B cell (primary cell): ENCODE measurements at regions of chr14 and their contacts with region 1.

Region 1: GRCh38 chr14:24710403-24711112 is 76.6 kb upstream of the GZMB start:
- DNase-seq: peak; percentile 74
- ATAC-seq: peak; percentile 37
- H3K4me3 ChIP-seq: no peak overlapping the region
- H3K4me3 Mint-ChIP-seq: no peak overlapping the region
- H3K27ac ChIP-seq: no peak overlapping the region
- H3K27ac Mint-ChIP-seq: no peak overlapping the region
- H3K4me1 ChIP-seq: peaks cover 11 to 25% of the 10 kb centered on the region in 2 donors
- H3K4me1 Mint-ChIP-seq: peaks cover 32% of the 10 kb centered on the region
- H3K27me3 ChIP-seq: peaks cover 0 to 11% (median 0%) of the 10 kb centered on the region in 4 experiments
- H3K27me3 Mint-ChIP-seq: no peaks in the 10 kb centered on the region
- CTCF ChIP-seq: peak; percentile 91

Region 2: DNA sequence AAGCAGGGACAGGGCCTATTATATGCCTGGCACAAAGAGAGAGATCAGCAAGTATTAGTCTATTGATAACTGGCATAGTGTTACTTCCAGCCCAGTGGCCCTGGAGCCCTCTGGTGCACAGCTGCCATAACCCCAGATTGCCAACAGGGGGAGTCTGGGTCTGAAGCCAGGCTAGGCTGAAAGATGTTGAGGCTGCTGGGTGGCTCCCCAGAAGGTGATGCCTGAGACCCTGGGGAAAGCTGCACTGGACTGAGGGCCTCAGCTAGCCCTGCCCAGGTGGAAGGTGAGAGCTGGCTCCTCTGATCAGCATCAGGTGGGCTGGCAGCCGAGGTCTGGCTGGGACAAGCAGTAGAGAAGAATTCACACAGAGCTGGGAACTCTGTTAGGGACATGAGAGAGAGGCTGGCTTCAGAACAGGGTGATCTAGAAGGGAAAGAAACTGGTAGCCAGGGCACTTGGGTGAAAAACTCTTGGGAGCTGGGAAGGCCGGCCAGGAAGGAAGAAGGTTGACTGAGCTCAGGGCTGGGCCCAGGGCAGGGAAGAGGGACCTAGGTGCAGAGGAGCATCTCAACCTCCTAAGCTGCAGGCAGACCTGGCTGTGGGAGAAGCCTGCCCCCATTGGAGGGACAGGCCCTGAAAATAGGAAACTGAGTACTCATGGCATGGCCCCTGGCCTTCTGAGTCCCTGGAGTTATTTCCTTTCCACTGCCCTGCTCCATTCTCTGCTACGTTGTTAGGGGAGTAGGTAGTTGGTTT is 104.9 kb before region 1 on chr14:
- CTCF ChIA-PET with region 1: interaction called, 16 read pairs
- POLR2A ChIA-PET with region 1: no interaction called
- intact Hi-C with region 1: no loop called
- DNase-seq: peak; percentile 73
- ATAC-seq: peak; percentile 93
- H3K4me3 ChIP-seq: no peak overlapping the region
- H3K4me3 Mint-ChIP-seq: no peak overlapping the region
- H3K27ac ChIP-seq: no peak overlapping the region
- H3K27ac Mint-ChIP-seq: peak overlapping the region; percentile 57
- H3K4me1 ChIP-seq: peaks cover 25 to 27% of the 10 kb centered on the region in 2 donors
- H3K4me1 Mint-ChIP-seq: peaks cover 36% of the 10 kb centered on the region
- H3K27me3 ChIP-seq: no peaks in the 10 kb centered on the region
- H3K27me3 Mint-ChIP-seq: peaks cover 13% of the 10 kb centered on the region
- CTCF ChIP-seq: peak; percentile 92

Region 3: GRCh38 chr14:24678801-24679247 is 31.7 kb before region 1 on chr14:
- CTCF ChIA-PET with region 1: interaction called, 54 read pairs
- POLR2A ChIA-PET with region 1: no interaction called
- intact Hi-C with region 1: loop called (anchors 2 kb)
- DNase-seq: peak; percentile 91
- ATAC-seq: peak; percentile 96
- H3K4me3 ChIP-seq: peak overlapping the region; percentile 3 to 58 (median 31)
- H3K4me3 Mint-ChIP-seq: peak overlapping the region; percentile 84
- H3K27ac ChIP-seq: peak overlapping the region in 1 of 2 donors; percentile 7
- H3K27ac Mint-ChIP-seq: peak overlapping the region; percentile 76
- H3K4me1 ChIP-seq: peaks cover 32% of the 10 kb centered on the region in 2 donors
- H3K4me1 Mint-ChIP-seq: peaks cover 49% of the 10 kb centered on the region
- H3K27me3 ChIP-seq: no peaks in the 10 kb centered on the region
- H3K27me3 Mint-ChIP-seq: no peaks in the 10 kb centered on the region
- CTCF ChIP-seq: peak; percentile 100

Region 4: GRCh38 chr14:24695265-24696241 is 15.0 kb before region 1 on chr14:
- CTCF ChIA-PET with region 1: interaction called, 59 read pairs
- POLR2A ChIA-PET with region 1: interaction called, 8 read pairs
- intact Hi-C with region 1: no loop called
- DNase-seq: peak; percentile 79
- ATAC-seq: peak; percentile 62
- H3K4me3 ChIP-seq: peak overlapping the region in 1 of 5 experiments; percentile 1
- H3K4me3 Mint-ChIP-seq: no peak overlapping the region
- H3K27ac ChIP-seq: peak overlapping the region; percentile 32 to 70
- H3K27ac Mint-ChIP-seq: no peak overlapping the region
- H3K4me1 ChIP-seq: peaks cover 53 to 55% of the 10 kb centered on the region in 2 donors
- H3K4me1 Mint-ChIP-seq: peaks cover 31% of the 10 kb centered on the region
- H3K27me3 ChIP-seq: no peaks in the 10 kb centered on the region
- H3K27me3 Mint-ChIP-seq: no peaks in the 10 kb centered on the region
- CTCF ChIP-seq: no peak

Region 5: GRCh38 chr14:25132732-25133422 is 422.3 kb after region 1 on chr14:
- CTCF ChIA-PET with region 1: interaction called, 145 read pairs
- POLR2A ChIA-PET with region 1: no interaction called
- intact Hi-C with region 1: loop called (anchors 1 kb)
- DNase-seq: peak; percentile 68
- ATAC-seq: peak; percentile 81
- H3K4me3 ChIP-seq: no peak overlapping the region
- H3K4me3 Mint-ChIP-seq: no peak overlapping the region
- H3K27ac ChIP-seq: no peak overlapping the region
- H3K27ac Mint-ChIP-seq: no peak overlapping the region
- H3K4me1 ChIP-seq: peaks cover 0 to 6% of the 10 kb centered on the region in 2 donors
- H3K4me1 Mint-ChIP-seq: peaks cover 3% of the 10 kb centered on the region
- H3K27me3 ChIP-seq: peaks cover 0 to 11% (median 3%) of the 10 kb centered on the region in 4 experiments
- H3K27me3 Mint-ChIP-seq: peaks cover 52% of the 10 kb centered on the region
- CTCF ChIP-seq: peak; percentile 80